Panc1 (cell line): ENCODE measurements at regions of chr1 and their contacts with region 1.

Region 1: DNA sequence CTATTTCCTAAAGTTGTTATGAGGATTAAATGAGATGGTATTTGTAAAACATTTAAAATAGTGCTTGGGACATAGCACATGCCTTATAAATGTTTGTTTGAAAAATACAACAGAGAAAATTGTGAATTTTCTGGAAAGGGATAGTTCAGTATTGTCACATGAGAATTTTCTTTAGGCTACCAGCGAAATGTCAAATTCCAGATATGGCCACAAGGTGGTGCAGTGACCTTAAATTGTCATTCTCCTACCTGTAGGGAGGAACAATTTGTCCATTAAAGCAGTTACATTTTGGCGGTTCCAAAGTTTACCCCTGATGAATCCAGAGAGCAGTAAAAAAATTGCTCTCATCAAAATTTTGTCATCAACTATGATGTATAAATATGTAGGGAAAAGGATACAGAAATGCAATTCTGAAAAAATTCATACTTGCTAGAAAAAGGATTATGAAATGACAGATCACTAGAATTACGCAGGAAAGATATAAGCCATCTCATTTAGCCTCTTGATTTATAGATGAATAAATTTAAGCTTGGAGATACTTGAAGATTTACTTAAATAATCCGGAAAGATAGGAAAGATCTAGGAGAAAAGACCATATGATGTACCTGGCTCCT is 50.2 kb upstream of the TSHB start:
- DNase-seq: no peak
- ATAC-seq: peak; percentile 56; the same call in 1 of the 2 replicates
- H3K4me3 ChIP-seq: no peak overlapping the region
- H3K27ac ChIP-seq: no peak overlapping the region
- H3K4me1 ChIP-seq: no peaks in the 10 kb centered on the region
- H3K27me3 ChIP-seq: no peaks in the 10 kb centered on the region
- CTCF ChIP-seq: peak; percentile 60; the same call in 1 of the 2 replicates

Region 2: GRCh38 chr1:114745291-114745690 is 234.1 kb before region 1 on chr1:
- CTCF ChIA-PET with region 1: no interaction called
- POLR2A ChIA-PET with region 1: no interaction called
- in situ Hi-C with region 1: no loop called
- intact Hi-C with region 1: no loop called
- DNase-seq: no peak
- ATAC-seq: no peak
- H3K4me3 ChIP-seq: no peak overlapping the region
- H3K27ac ChIP-seq: no peak overlapping the region
- H3K4me1 ChIP-seq: no peaks in the 10 kb centered on the region
- H3K27me3 ChIP-seq: no peaks in the 10 kb centered on the region
- CTCF ChIP-seq: no peak

Region 3: DNA sequence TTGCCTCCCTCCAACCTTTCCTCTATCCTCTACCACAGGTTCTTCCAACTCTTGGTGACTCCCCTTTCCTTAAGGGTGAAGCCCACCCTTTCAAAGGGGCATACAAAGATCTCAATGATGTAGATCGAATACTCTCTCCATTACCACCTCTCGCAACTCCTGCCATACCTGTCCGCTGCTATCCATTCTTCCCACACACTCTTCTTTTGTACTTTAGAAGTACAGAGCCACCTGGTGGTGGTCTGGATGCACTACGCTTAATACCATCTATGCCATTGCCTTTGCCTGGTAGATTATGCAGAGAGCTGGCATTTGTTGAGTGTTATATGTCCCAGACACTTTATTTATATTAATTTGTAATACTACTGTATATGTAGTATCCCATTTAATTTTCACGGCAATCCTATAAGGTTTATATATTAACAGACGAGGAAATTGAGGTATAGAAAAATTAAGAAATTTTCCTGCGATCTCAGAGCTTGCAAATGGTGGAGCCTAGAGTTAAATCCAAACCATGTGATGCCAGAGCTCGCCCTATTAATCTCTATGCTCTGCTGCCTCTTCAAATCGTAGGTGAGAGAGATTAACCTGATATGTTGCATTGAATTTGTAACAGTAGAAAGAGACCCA is 73.2 kb after region 1 on chr1:
- CTCF ChIA-PET with region 1: no interaction called
- POLR2A ChIA-PET with region 1: no interaction called
- in situ Hi-C with region 1: no loop called
- intact Hi-C with region 1: loop called (anchors 5 kb)
- DNase-seq: peak; percentile 38
- ATAC-seq: peak; percentile 84
- H3K4me3 ChIP-seq: no peak overlapping the region
- H3K27ac ChIP-seq: no peak overlapping the region
- H3K4me1 ChIP-seq: no peaks in the 10 kb centered on the region
- H3K27me3 ChIP-seq: peaks cover 7% of the 10 kb centered on the region
- CTCF ChIP-seq: peak; percentile 80

Region 4: GRCh38 chr1:115112496-115113375 is 133.4 kb after region 1 on chr1:
- CTCF ChIA-PET with region 1: no interaction called
- POLR2A ChIA-PET with region 1: no interaction called
- in situ Hi-C with region 1: no loop called
- intact Hi-C with region 1: loop called (anchors 1 kb)
- DNase-seq: no peak
- ATAC-seq: peak; percentile 42; the same call in 1 of the 2 replicates
- H3K4me3 ChIP-seq: no peak overlapping the region
- H3K27ac ChIP-seq: no peak overlapping the region
- H3K4me1 ChIP-seq: no peaks in the 10 kb centered on the region
- H3K27me3 ChIP-seq: no peaks in the 10 kb centered on the region
- CTCF ChIP-seq: peak; percentile 89